ENCODE measurements at regions of chr15 and their contacts with region 1.

Region 1: DNA sequence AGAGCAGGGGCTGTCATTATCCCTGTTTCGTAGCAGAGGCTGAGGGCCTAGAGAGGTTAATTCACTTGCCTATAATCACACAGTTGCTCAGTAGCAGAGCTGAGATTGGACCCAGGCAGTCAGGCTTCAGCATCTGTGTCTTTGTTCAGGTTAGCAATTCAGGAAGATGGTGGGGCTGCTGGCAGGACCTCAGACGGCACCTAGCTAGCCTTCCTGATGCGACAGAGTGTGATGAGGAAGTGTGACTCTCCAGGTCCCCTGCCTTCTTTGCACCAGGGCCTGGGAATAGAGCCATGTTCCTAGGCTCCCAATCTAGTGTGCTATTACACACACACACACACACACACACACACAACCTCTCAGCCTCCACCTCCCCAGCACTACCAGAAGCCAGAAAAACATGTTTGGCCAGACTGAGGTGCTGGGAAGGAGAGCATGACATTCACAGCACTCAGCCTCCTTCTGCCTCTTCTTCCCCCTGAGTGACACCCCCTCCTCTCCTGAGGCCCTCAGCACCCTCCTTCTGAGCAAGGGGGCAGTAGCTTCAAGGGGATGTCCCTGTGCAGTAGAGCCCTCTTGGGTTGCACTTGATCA is 88.9 kb downstream of the TLE3 start:
- DNase-seq: no peak
- H3K4me3 ChIP-seq: no peak overlapping the region
- H3K27ac ChIP-seq: no peak overlapping the region
- H3K4me1 ChIP-seq: no peaks in the 10 kb centered on the region
- H3K27me3 ChIP-seq: peaks cover 4% of the 10 kb centered on the region
- CTCF ChIP-seq: no peak

Region 2: DNA sequence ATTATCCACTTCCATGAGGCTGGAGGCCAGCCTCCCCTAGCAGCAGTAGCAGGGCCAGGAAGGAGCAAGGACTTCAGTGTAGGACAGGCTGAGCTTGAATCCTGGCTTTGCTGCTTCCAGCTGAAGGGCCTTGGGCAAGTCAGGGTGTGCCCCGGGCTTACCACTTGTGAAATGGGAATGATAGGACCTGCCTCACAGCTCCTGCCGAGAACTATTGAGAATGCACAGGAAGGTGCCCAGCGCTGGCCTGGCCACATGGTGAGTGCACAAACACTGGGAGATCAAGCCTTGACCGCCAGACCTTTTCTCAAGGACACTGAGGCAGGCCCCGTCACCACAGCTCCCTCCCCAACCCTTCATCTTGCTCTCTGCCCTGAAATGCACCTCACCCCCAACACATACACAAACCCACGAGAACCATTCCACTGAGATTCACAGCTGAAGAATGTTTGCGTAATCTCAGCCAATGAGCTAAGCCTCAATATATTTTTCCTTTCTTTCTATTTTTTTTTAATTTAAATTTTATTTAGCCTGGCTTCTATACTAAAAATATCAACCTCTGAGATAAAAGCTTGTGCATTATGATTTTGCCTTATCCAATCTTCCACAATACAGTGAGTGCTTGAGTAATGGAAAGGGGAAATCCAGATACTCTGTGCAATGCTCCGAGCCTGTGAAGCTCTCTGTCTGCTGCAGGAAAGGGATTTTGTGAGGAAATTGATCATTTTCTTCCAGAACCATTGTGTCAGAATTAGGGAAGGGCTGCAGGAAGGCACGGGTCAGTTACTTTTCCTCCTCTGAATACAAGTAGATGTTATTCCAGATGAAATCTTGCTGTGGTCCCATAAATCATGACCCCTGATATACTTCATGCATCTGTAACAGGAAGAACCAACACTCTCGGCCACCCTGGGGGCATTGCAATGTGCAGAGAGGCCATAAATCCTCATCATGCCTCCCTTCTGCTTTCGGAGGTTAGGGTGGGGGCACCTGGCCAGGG is 105.0 kb before region 1 on chr15:
- CTCF ChIA-PET with region 1: no interaction called
- dilution Hi-C with region 1: no loop called
- in situ Hi-C with region 1: no loop called
- intact Hi-C with region 1: no loop called
- DNase-seq: no peak
- H3K4me3 ChIP-seq: no peak overlapping the region
- H3K27ac ChIP-seq: no peak overlapping the region
- H3K4me1 ChIP-seq: no peaks in the 10 kb centered on the region
- H3K27me3 ChIP-seq: no peaks in the 10 kb centered on the region
- CTCF ChIP-seq: no peak

Region 3: DNA sequence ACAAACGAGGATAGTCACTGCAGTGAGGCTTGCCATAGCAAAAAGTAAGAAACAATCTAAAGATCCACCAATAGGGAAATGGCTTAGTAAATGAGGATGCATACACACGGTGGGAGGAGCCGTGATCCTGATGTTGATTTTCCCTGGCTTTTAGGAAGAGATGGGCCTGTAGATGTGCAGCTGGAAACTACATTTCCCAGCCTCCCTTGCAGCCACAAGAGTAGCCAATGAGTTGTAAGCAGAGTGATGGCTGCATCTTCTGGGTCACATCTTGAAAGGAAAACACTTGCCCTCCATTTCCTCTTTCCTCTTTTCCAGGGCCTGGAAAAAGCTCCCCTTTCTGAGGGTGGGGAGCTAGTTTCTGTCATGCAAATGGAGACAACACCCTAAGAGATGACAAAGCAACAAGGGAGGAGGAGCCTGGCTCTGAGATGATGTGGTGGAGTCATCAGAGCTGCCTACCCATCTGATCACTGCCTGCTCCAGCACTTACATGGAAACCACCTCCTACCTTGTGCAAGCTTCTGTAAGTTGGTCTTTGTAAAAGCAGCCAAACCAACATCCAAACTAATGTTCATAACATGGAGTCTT is 50.2 kb before region 1 on chr15:
- CTCF ChIA-PET with region 1: no interaction called
- dilution Hi-C with region 1: loop called (anchors 5 kb)
- in situ Hi-C with region 1: no loop called
- intact Hi-C with region 1: no loop called
- DNase-seq: peak; percentile 8
- H3K4me3 ChIP-seq: no peak overlapping the region
- H3K27ac ChIP-seq: no peak overlapping the region
- H3K4me1 ChIP-seq: no peaks in the 10 kb centered on the region
- H3K27me3 ChIP-seq: no peaks in the 10 kb centered on the region
- CTCF ChIP-seq: no peak

Region 4: GRCh38 chr15:69976366-69976994 is 32.3 kb before region 1 on chr15:
- CTCF ChIA-PET with region 1: no interaction called
- dilution Hi-C with region 1: no loop called
- in situ Hi-C with region 1: no loop called
- intact Hi-C with region 1: no loop called
- DNase-seq: peak; percentile 35
- H3K4me3 ChIP-seq: no peak overlapping the region
- H3K27ac ChIP-seq: no peak overlapping the region
- H3K4me1 ChIP-seq: no peaks in the 10 kb centered on the region
- H3K27me3 ChIP-seq: no peaks in the 10 kb centered on the region
- CTCF ChIP-seq: no peak

Region 5: DNA sequence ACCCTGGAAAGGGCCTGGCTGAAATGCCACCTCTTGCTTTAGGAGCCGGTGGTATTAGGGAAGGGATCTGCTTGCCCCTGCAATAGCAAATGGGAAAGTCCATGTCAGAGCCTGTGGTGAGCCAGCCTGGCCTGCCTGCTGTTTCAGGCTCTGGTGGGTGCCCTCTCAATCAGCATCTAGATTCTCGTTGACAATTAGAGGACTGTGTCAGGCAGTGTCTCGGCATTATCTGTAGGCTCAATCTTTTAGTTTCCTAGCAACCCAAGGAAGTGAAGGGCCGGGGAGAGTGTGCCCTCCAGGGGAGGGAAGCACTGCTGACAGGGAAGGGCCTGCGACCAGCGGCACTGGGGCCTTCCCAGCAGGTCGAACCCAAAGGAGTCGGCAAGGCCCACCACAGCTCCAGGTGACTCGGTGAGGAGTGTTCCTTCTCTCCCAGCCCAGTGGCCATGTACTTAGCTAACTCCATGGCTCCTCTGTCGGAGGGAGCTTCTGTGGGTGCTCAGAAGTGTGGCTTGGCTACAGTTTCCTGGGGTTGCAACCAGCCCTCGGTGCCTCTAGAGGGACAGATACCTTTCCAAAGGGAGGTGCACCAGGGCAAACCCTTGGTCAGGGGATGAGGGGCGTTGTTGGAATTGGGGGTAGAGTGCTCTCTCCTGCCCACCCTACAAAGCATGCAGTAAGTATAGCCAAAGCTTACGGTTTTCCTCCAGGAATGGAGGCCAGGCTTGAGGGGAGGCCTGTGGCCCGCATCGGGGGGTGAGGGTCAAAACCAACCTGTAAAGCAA is 47.0 kb after region 1 on chr15:
- CTCF ChIA-PET with region 1: no interaction called
- dilution Hi-C with region 1: loop called (anchors 5 kb)
- in situ Hi-C with region 1: no loop called
- intact Hi-C with region 1: no loop called
- DNase-seq: no peak
- H3K4me3 ChIP-seq: no peak overlapping the region
- H3K27ac ChIP-seq: no peak overlapping the region
- H3K4me1 ChIP-seq: no peaks in the 10 kb centered on the region
- H3K27me3 ChIP-seq: no peaks in the 10 kb centered on the region
- CTCF ChIP-seq: no peak

Measured in mammary epithelial cell (primary cell).